ENCODE measurements at regions of chr6 and their contacts with region 1.

Region 1: GRCh38 chr6:106141441-106142237 is 55.5 kb downstream of the PRDM1 start:
- DNase-seq: peak; percentile 17 to 46 (median 31)
- H3K4me3 ChIP-seq: peak overlapping the region in 1 of 2 donors; percentile 5
- H3K4me3 Mint-ChIP-seq: peak overlapping the region in 7 of 8 donors; percentile 37 to 75 (median 71)
- H3K27ac ChIP-seq: no peak overlapping the region
- H3K27ac Mint-ChIP-seq: peak overlapping the region; percentile 74 to 90 (median 87)
- H3K4me1 ChIP-seq: peaks cover 44% of the 10 kb centered on the region
- H3K4me1 Mint-ChIP-seq: peaks cover 24 to 54% (median 34%) of the 10 kb centered on the region in 4 donors
- H3K27me3 ChIP-seq: no peaks in the 10 kb centered on the region
- H3K27me3 Mint-ChIP-seq: no peaks in the 10 kb centered on the region

Region 2: DNA sequence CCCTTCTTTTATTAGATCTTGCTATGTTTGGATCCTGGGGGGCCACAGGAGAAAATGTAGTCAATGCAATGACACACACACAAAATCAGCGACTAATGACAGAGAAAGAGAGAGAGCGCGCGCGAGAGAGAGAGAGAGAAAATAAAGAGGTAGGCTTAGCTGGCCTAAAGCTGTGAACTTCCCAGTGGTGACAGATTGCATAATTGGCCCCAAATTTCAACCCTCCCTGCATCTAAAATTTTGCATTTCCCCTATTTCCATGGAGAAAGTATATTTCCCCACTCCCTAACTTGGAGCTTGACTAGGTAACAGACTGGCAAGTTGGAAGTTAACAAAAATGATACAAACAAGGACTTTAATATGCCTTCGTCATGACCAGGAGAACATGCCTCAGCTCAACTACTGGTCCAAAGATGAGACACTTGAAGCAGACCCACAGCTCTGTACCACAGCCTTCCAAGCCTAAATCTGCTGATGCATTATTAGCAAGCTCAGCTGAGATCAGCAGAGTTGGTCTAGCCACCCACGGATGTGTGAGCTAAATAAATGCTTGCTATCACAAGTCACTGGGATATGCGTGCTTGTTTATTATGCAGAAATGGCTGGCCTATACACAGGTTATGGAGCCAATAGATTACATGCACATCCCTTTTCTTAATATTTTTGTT is 173.6 kb before region 1 on chr6:
- CTCF ChIA-PET with region 1: no interaction called
- POLR2A ChIA-PET with region 1: no interaction called
- intact Hi-C with region 1: no loop called
- DNase-seq: no peak
- H3K4me3 ChIP-seq: no peak overlapping the region
- H3K4me3 Mint-ChIP-seq: no peak overlapping the region
- H3K27ac ChIP-seq: no peak overlapping the region
- H3K27ac Mint-ChIP-seq: no peak overlapping the region
- H3K4me1 ChIP-seq: no peaks in the 10 kb centered on the region
- H3K4me1 Mint-ChIP-seq: no peaks in the 10 kb centered on the region
- H3K27me3 ChIP-seq: no peaks in the 10 kb centered on the region
- H3K27me3 Mint-ChIP-seq: no peaks in the 10 kb centered on the region

Region 3: GRCh38 chr6:106163446-106163965 is 21.9 kb after region 1 on chr6:
- CTCF ChIA-PET with region 1: interaction called, 7 read pairs
- POLR2A ChIA-PET with region 1: interaction called, 13 read pairs
- intact Hi-C with region 1: no loop called
- DNase-seq: peak; percentile 44 to 73 (median 51)
- H3K4me3 ChIP-seq: peak overlapping the region in 1 of 2 donors; percentile 27
- H3K4me3 Mint-ChIP-seq: peak overlapping the region; percentile 46 to 78 (median 68)
- H3K27ac ChIP-seq: peak overlapping the region; percentile 57
- H3K27ac Mint-ChIP-seq: peak overlapping the region; percentile 74 to 98 (median 93)
- H3K4me1 ChIP-seq: peaks cover 32% of the 10 kb centered on the region
- H3K4me1 Mint-ChIP-seq: peaks cover 30 to 56% (median 42%) of the 10 kb centered on the region in 4 donors
- H3K27me3 ChIP-seq: no peaks in the 10 kb centered on the region
- H3K27me3 Mint-ChIP-seq: no peaks in the 10 kb centered on the region

Region 4: GRCh38 chr6:106184629-106185028 is 43.0 kb after region 1 on chr6:
- CTCF ChIA-PET with region 1: interaction called, 3 read pairs
- POLR2A ChIA-PET with region 1: interaction called, 12 read pairs
- intact Hi-C with region 1: no loop called
- DNase-seq: peak in 1 of 5 donors; percentile 13
- H3K4me3 ChIP-seq: no peak overlapping the region
- H3K4me3 Mint-ChIP-seq: peak overlapping the region in 1 of 8 donors; percentile 58
- H3K27ac ChIP-seq: no peak overlapping the region
- H3K27ac Mint-ChIP-seq: peak overlapping the region in 2 of 7 donors; percentile 59 to 66
- H3K4me1 ChIP-seq: peaks cover 91% of the 10 kb centered on the region
- H3K4me1 Mint-ChIP-seq: peaks cover 48 to 75% (median 63%) of the 10 kb centered on the region in 4 donors
- H3K27me3 ChIP-seq: no peaks in the 10 kb centered on the region
- H3K27me3 Mint-ChIP-seq: no peaks in the 10 kb centered on the region

Region 5: DNA sequence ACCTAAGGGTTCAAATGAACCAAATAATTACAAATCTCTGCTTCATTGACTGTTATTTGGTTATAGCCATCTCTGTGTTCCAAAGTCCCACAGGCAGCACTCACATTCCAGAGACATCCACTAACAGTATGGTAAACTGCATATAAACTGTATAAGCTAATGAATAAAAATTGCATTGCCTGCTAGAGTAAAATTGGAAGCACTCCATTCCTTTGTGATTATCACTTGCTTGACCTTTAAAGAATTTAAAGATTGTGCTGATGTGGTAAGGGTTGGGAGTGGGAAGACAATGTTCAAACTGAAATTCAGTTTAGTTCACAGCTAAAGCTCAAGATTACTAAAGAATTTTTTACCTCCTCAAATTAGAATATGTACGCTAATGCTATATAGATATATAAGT is 1963.9 kb after region 1 on chr6:
- CTCF ChIA-PET with region 1: no interaction called
- POLR2A ChIA-PET with region 1: no interaction called
- intact Hi-C with region 1: no loop called
- DNase-seq: no peak
- H3K4me3 ChIP-seq: no peak overlapping the region
- H3K4me3 Mint-ChIP-seq: no peak overlapping the region
- H3K27ac ChIP-seq: no peak overlapping the region
- H3K27ac Mint-ChIP-seq: no peak overlapping the region
- H3K4me1 ChIP-seq: no peaks in the 10 kb centered on the region
- H3K4me1 Mint-ChIP-seq: no peaks in the 10 kb centered on the region
- H3K27me3 ChIP-seq: peaks cover 9% of the 10 kb centered on the region
- H3K27me3 Mint-ChIP-seq: peaks cover 8 to 13% of the 10 kb centered on the region in 2 donors

Measured in CD4-positive, alpha-beta memory T cell (primary cell).